ENCODE measurements at regions of chr14 and their contacts with region 1.

Region 1: GRCh38 chr14:69226178-69226577 is 33.8 kb upstream of the GALNT16 start:
- DNase-seq: peak; percentile 92
- H3K4me3 ChIP-seq: no peak overlapping the region
- H3K27ac ChIP-seq: peak overlapping the region; percentile 47
- H3K4me1 ChIP-seq: peaks cover 9% of the 10 kb centered on the region
- H3K27me3 ChIP-seq: no peaks in the 10 kb centered on the region
- CTCF ChIP-seq: no peak
- POLR2A ChIP-seq: no peak

Region 2: GRCh38 chr14:69270795-69271708 is 44.9 kb after region 1 on chr14:
- CTCF ChIA-PET with region 1: no interaction called
- POLR2A ChIA-PET with region 1: no interaction called
- dilution Hi-C with region 1: no loop called
- intact Hi-C with region 1: no loop called
- DNase-seq: no peak
- H3K4me3 ChIP-seq: no peak overlapping the region
- H3K27ac ChIP-seq: no peak overlapping the region
- H3K4me1 ChIP-seq: peaks cover 8% of the 10 kb centered on the region
- H3K27me3 ChIP-seq: peaks cover 13 to 20% of the 10 kb centered on the region in 2 experiments
- CTCF ChIP-seq: no peak
- POLR2A ChIP-seq: no peak

Region 3: GRCh38 chr14:69695322-69696203 is 469.4 kb after region 1 on chr14:
- CTCF ChIA-PET with region 1: no interaction called
- POLR2A ChIA-PET with region 1: interaction called, 4 read pairs
- dilution Hi-C with region 1: no loop called
- intact Hi-C with region 1: loop called (anchors 5 kb)
- DNase-seq: peak; percentile 79
- H3K4me3 ChIP-seq: no peak overlapping the region
- H3K27ac ChIP-seq: no peak overlapping the region
- H3K4me1 ChIP-seq: peaks cover 4% of the 10 kb centered on the region
- H3K27me3 ChIP-seq: no peaks in the 10 kb centered on the region
- CTCF ChIP-seq: no peak
- POLR2A ChIP-seq: no peak

Measured in endothelial cell of umbilical vein (primary cell).